T-cell (primary cell): ENCODE measurements at regions of chr2 and their contacts with region 1.

Region 1: GRCh38 chr2:16613539-16614011 is 52.1 kb downstream of the CYRIA start:
- DNase-seq: no peak
- ATAC-seq: no peak
- H3K4me3 ChIP-seq: no peak overlapping the region
- H3K4me3 Mint-ChIP-seq: no peak overlapping the region
- H3K27ac ChIP-seq: no peak overlapping the region
- H3K27ac Mint-ChIP-seq: no peak overlapping the region
- H3K4me1 ChIP-seq: peaks cover 0 to 6% of the 10 kb centered on the region in 2 experiments
- H3K4me1 Mint-ChIP-seq: peaks cover 0 to 7% (median 5%) of the 10 kb centered on the region in 3 donors
- H3K27me3 ChIP-seq: peaks cover 0 to 6% of the 10 kb centered on the region in 2 experiments
- H3K27me3 Mint-ChIP-seq: peaks cover 20 to 24% of the 10 kb centered on the region in 2 donors

Region 2: DNA sequence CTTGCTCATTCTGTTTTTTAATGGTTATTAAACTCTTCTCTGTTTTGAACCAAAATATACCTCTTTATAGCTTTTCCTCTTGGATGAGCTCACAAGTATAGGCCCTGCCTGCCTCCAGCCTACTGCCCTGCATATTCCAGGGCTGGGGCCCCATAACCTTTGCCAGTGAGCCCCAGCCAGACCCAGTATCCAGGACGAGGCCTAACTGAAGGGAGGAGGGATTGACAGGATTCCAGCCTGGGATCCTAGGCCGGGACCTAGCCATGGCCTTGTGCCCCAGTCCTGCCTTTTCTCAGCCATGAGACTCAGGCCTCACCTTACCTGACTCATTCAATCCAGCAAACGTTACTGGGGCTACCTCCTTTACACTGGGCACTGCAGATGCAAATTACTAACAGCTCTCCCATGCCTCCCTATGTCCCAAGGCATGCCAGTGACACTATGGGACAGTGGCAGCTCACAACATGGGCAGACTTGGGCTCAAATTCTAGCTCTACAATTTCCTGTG is 862.7 kb before region 1 on chr2:
- CTCF ChIA-PET with region 1: no interaction called
- POLR2A ChIA-PET with region 1: interaction called in 1 of 2 experiments, 10 read pairs
- DNase-seq: no peak
- ATAC-seq: no peak
- H3K4me3 ChIP-seq: no peak overlapping the region
- H3K4me3 Mint-ChIP-seq: no peak overlapping the region
- H3K27ac ChIP-seq: no peak overlapping the region
- H3K27ac Mint-ChIP-seq: no peak overlapping the region
- H3K4me1 ChIP-seq: no peaks in the 10 kb centered on the region
- H3K4me1 Mint-ChIP-seq: no peaks in the 10 kb centered on the region
- H3K27me3 ChIP-seq: peaks cover 0 to 11% of the 10 kb centered on the region in 2 experiments
- H3K27me3 Mint-ChIP-seq: peaks cover 0 to 4% of the 10 kb centered on the region in 2 donors

Region 3: DNA sequence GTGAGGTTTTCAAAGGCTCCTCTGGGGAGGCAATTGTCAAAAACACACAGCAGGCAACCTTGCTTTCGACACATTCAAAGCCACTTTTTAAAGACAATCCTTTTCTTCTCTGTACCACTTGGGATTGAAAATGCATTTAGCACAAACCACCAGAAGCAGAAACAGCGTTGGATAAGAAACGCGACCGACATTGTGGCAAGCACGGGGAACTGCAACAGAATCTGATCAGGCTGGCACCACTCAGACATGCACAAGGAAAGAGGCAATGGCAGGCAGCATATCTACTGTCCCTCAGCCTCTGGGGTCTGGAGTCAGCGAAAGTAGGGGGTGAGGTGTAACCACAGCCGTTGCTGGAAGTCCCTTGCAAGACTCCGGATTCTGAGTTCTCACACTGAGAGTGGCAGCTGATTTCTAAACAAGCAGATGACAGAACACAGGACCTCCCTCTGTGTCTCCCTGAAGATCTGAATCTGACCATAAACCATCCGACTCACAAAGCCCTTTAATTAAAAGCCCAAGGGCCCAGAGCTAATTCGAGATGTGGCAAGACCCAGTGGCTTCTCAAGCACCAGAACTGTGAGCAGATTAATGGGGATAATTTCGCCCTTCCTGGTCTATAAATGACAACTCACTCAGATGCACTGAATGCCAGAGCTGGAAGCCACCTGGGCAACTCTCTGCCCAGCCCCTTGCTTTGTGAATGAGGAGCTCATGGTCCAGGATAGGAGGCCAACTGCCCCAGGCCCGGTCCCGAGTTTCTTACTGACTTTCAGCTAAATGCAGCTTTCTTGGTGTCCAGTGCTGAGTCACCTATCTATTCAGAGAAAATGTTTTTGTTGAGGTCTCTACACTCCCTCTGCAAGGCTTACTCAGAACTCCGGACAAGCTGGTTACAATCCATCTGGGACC is 22.5 kb after region 1 on chr2:
- CTCF ChIA-PET with region 1: no interaction called
- POLR2A ChIA-PET with region 1: no interaction called
- DNase-seq: no peak
- ATAC-seq: peak in 1 of 4 experiments; percentile 60
- H3K4me3 ChIP-seq: no peak overlapping the region
- H3K4me3 Mint-ChIP-seq: no peak overlapping the region
- H3K27ac ChIP-seq: no peak overlapping the region
- H3K27ac Mint-ChIP-seq: no peak overlapping the region
- H3K4me1 ChIP-seq: peaks cover 12 to 15% of the 10 kb centered on the region in 2 experiments
- H3K4me1 Mint-ChIP-seq: peaks cover 19 to 26% (median 26%) of the 10 kb centered on the region in 3 donors
- H3K27me3 ChIP-seq: peaks cover 0 to 4% of the 10 kb centered on the region in 2 experiments
- H3K27me3 Mint-ChIP-seq: peaks cover 10 to 11% of the 10 kb centered on the region in 2 donors

Region 4: GRCh38 chr2:16756831-16757644 is 143.5 kb after region 1 on chr2:
- CTCF ChIA-PET with region 1: interaction called, 17 to 22 read pairs
- POLR2A ChIA-PET with region 1: no interaction called
- DNase-seq: peak; percentile 7 to 74 (median 41)
- ATAC-seq: peak; percentile 31 to 61 (median 40)
- H3K4me3 ChIP-seq: no peak overlapping the region
- H3K4me3 Mint-ChIP-seq: no peak overlapping the region
- H3K27ac ChIP-seq: no peak overlapping the region
- H3K27ac Mint-ChIP-seq: no peak overlapping the region
- H3K4me1 ChIP-seq: no peaks in the 10 kb centered on the region
- H3K4me1 Mint-ChIP-seq: no peaks in the 10 kb centered on the region
- H3K27me3 ChIP-seq: peaks cover 0 to 2% of the 10 kb centered on the region in 2 experiments
- H3K27me3 Mint-ChIP-seq: peaks cover 4 to 8% of the 10 kb centered on the region in 2 donors